ENCODE measurements at regions of chr2 and their contacts with region 1.

Region 1: GRCh38 chr2:77484026-77484425 is 38.1 kb downstream of the LRRTM4 start:
- DNase-seq: no peak
- ATAC-seq: no peak
- H3K4me3 Mint-ChIP-seq: no peak overlapping the region
- H3K27ac Mint-ChIP-seq: no peak overlapping the region
- H3K4me1 Mint-ChIP-seq: no peaks in the 10 kb centered on the region
- H3K27me3 Mint-ChIP-seq: no peaks in the 10 kb centered on the region

Region 2: DNA sequence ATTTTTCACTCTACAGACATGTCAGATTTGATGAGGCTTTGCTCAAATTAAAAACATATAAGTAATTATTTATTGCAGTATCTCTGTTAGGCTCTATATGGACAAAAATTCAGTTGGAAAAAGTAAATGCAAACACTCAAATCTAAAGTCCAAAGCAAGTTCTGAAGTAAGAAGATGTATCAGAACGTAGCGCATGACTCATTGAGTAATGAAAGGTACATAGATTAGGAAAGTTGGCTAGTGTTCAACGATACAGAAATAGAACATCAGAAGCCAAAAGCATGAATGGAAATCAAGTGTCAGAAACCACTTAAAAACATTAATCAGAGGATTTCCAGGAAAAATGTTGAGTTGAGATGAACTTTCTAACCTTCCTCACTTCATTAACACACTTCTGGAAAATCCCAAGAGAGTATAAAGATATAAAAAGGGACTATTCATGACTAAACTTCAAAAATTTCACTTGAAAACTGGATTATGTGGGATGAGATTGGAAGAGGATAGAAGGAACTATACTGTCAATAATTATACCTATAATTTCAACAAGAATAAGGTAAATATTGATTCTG is 455.9 kb before region 1 on chr2:
- CTCF ChIA-PET with region 1: no interaction called
- POLR2A ChIA-PET with region 1: no interaction called
- intact Hi-C with region 1: no loop called
- DNase-seq: no peak
- ATAC-seq: no peak
- H3K4me3 Mint-ChIP-seq: no peak overlapping the region
- H3K27ac Mint-ChIP-seq: no peak overlapping the region
- H3K4me1 Mint-ChIP-seq: no peaks in the 10 kb centered on the region
- H3K27me3 Mint-ChIP-seq: no peaks in the 10 kb centered on the region

Region 3: DNA sequence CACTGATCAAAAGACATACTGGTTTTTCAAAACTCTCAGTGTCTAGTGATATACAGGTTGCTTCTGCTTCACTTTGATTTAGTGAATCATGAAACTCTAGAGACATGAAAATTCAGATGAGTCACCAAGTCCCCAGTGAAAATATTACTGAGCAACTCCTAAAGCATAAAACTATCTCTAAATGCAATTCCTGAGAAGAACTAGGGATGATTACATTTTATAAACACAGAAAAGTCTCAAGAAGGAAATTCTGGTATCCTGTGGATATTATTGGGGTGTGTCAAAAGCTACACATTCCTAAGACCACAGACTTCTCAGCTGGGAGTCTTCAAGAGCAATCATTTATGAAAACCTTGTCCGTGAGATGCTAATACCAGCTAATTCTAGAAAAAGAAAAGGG is 28.5 kb after region 1 on chr2:
- CTCF ChIA-PET with region 1: no interaction called
- POLR2A ChIA-PET with region 1: no interaction called
- intact Hi-C with region 1: no loop called
- DNase-seq: no peak
- ATAC-seq: no peak
- H3K4me3 Mint-ChIP-seq: no peak overlapping the region
- H3K27ac Mint-ChIP-seq: no peak overlapping the region
- H3K4me1 Mint-ChIP-seq: no peaks in the 10 kb centered on the region
- H3K27me3 Mint-ChIP-seq: no peaks in the 10 kb centered on the region

Region 4: GRCh38 chr2:78281164-78281563 is 797.1 kb after region 1 on chr2:
- CTCF ChIA-PET with region 1: no interaction called
- POLR2A ChIA-PET with region 1: no interaction called
- intact Hi-C with region 1: no loop called
- DNase-seq: no peak
- ATAC-seq: no peak
- H3K4me3 Mint-ChIP-seq: no peak overlapping the region
- H3K27ac Mint-ChIP-seq: no peak overlapping the region
- H3K4me1 Mint-ChIP-seq: no peaks in the 10 kb centered on the region
- H3K27me3 Mint-ChIP-seq: no peaks in the 10 kb centered on the region

Region 5: GRCh38 chr2:79065201-79065600 is 1581.2 kb after region 1 on chr2:
- CTCF ChIA-PET with region 1: no interaction called
- POLR2A ChIA-PET with region 1: interaction called, 11 read pairs
- intact Hi-C with region 1: no loop called
- DNase-seq: no peak
- ATAC-seq: no peak
- H3K4me3 Mint-ChIP-seq: no peak overlapping the region
- H3K27ac Mint-ChIP-seq: no peak overlapping the region
- H3K4me1 Mint-ChIP-seq: no peaks in the 10 kb centered on the region
- H3K27me3 Mint-ChIP-seq: no peaks in the 10 kb centered on the region

Measured in activated CD4-positive, alpha-beta T cell treated with anti-CD3 and anti-CD28 coated beads for 36 hours (primary cell).